ENCODE measurements at regions of chr15 and their contacts with region 1.

Region 1: DNA sequence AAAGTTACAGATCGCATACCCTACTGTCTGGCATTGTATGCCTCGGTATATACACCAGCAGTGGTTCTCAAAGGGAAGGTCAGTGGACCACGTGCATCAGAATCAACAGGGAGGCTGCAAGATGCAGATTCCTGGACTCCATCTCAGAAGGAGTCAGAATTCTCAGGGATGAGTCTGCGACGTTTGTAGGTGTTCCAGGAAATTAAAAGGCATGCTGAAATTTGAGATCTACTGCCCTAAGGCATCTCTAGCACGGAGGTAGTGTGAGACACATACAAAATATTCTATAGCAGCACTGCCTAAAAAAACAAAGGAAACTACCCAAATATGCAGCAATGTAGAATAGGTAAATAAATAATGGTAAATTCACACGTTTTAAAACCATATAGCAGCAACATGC is 136.8 kb upstream of the BNIP2 start:
- DNase-seq: peak; percentile 53 to 91
- H3K4me3 ChIP-seq: no peak overlapping the region
- H3K27ac ChIP-seq: peak overlapping the region; percentile 93
- H3K4me1 ChIP-seq: peaks cover 52% of the 10 kb centered on the region
- H3K27me3 ChIP-seq: no peaks in the 10 kb centered on the region
- CTCF ChIP-seq: no peak

Region 2: DNA sequence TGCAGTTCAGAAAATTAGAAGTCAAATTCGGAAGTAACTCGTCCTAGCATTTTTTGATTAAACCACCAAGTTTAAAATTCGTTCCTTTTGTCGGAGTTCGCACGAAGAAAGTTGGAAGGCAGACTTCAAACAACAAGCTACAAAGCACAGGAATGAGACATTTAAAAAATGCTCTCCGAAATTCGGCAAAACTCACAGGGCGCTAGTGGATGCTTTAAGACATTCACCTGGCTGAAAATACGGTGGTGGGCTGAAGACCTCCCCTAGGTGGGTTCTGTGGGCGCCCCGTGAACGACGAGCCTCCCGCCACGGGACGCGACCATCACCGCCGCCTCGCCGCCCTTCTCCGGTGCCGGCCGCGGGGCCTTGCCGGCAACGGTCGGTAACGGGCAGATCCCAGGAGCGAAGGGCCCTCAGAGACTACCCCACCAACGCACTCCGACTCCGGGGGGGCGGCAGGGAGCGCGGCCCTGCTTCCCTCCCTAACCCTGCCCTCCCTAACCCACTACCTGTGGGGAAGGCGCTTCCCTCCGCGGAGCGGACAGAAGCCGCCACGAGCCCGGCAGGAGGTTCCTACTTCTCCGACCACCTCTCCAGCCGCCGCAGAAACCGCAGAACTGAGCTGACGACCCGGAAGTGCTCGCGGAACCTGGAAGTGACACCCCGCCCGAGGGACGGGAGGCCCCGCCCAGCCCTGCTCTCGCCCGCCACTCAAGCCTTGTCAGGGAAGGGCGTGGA is 168.8 kb before region 1 on chr15 and contains the start of gene GTF2A2:
- CTCF ChIA-PET with region 1: no interaction called
- POLR2A ChIA-PET with region 1: no interaction called
- intact Hi-C with region 1: no loop called
- DNase-seq: peak; percentile 84 to 93
- H3K4me3 ChIP-seq: peak within 1 kb of the TSS; percentile 96
- H3K27ac ChIP-seq: peak within 1 kb of the TSS; percentile 37
- H3K4me1 ChIP-seq: peaks cover 14% of the 10 kb centered on the region
- H3K27me3 ChIP-seq: no peaks in the 10 kb centered on the region
- CTCF ChIP-seq: no peak
- total RNA-seq, gene GTF2A2: 80.8 and 111 TPM in 2 replicates

Region 3: DNA sequence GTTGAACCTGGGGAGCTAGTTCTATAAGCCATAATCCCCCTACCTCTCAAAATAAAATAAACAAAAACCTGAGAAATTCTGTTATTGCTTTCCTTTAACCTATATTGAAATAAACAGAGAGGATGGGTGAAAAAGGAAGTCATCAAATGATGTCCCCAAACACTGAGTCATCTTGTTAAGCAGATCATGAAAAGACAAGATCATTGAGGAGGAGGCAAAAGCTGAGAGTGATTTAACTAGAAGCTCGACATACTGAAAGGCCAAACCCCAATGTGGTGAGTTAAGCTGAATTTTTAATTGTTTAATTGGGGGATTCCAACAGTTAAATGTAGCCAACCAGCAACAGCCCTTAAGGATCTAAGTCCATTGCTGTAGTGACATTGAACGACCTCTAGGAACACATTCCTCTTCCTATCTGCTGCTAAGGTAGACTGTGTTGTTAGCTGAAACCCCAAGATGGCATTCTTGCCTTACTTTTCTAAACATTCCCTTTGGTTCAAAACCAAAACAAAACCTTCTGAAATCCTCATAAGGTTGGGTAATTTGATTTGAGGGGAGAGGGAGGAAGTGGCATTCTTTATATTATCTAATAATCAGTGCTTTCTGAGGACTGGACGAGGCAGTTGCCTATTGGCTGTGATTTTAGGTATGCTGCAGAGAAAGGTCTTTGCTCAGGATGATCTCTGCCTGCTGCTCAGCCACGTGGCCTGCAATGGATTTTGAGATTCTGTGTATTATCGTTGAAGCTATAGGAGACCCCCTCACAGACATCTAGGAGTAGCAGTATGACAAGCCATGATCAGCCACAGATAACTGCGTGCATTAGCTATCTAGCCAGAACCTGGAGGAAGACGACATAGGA is 74.1 kb before region 1 on chr15:
- CTCF ChIA-PET with region 1: no interaction called
- POLR2A ChIA-PET with region 1: no interaction called
- intact Hi-C with region 1: loop called (anchors 2 kb)
- DNase-seq: peak; percentile 8 to 68
- H3K4me3 ChIP-seq: no peak overlapping the region
- H3K27ac ChIP-seq: no peak overlapping the region
- H3K4me1 ChIP-seq: no peaks in the 10 kb centered on the region
- H3K27me3 ChIP-seq: no peaks in the 10 kb centered on the region
- CTCF ChIP-seq: peak; percentile 62

Region 4: GRCh38 chr15:59917504-59918157 is 91.7 kb after region 1 on chr15:
- CTCF ChIA-PET with region 1: interaction called, 7 read pairs
- POLR2A ChIA-PET with region 1: no interaction called
- intact Hi-C with region 1: loop called (anchors 1 kb)
- DNase-seq: peak; percentile 48 to 78
- H3K4me3 ChIP-seq: no peak overlapping the region
- H3K27ac ChIP-seq: no peak overlapping the region
- H3K4me1 ChIP-seq: peaks cover 19% of the 10 kb centered on the region
- H3K27me3 ChIP-seq: no peaks in the 10 kb centered on the region
- CTCF ChIP-seq: peak; percentile 65

Region 5: DNA sequence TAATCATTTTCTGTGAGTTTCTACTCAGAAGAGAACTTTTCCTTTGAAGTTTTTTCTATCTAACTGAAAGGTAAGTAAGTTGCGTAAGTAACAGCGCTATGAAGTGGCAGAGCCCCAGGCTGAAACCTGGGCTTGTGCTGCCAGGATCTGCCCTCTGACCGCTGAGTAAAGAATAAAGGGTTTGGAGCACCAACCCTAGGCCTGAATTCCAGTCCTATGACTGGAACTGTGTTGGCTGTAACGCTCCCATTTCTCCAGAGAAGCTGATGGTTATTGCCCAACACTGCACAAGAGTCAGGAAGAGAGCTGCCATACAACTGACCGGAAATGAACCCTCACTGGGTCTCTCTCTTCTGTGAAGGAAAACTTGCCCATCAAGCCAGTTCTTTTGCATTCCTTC is 265.3 kb after region 1 on chr15:
- CTCF ChIA-PET with region 1: no interaction called
- POLR2A ChIA-PET with region 1: interaction called, 5 read pairs
- intact Hi-C with region 1: loop called (anchors 1 kb)
- DNase-seq: peak; percentile 87 to 98
- H3K4me3 ChIP-seq: no peak overlapping the region
- H3K27ac ChIP-seq: peak overlapping the region; percentile 96
- H3K4me1 ChIP-seq: peaks cover 69% of the 10 kb centered on the region
- H3K27me3 ChIP-seq: no peaks in the 10 kb centered on the region
- CTCF ChIP-seq: no peak

Region 6: GRCh38 chr15:60326824-60327654 is 501.1 kb after region 1 on chr15:
- CTCF ChIA-PET with region 1: no interaction called
- POLR2A ChIA-PET with region 1: interaction called, 3 read pairs
- intact Hi-C with region 1: loop called (anchors 5 kb)
- DNase-seq: peak; percentile 36 to 42
- H3K4me3 ChIP-seq: no peak overlapping the region
- H3K27ac ChIP-seq: no peak overlapping the region
- H3K4me1 ChIP-seq: no peaks in the 10 kb centered on the region
- H3K27me3 ChIP-seq: no peaks in the 10 kb centered on the region
- CTCF ChIP-seq: peak; percentile 89

Region 7: DNA sequence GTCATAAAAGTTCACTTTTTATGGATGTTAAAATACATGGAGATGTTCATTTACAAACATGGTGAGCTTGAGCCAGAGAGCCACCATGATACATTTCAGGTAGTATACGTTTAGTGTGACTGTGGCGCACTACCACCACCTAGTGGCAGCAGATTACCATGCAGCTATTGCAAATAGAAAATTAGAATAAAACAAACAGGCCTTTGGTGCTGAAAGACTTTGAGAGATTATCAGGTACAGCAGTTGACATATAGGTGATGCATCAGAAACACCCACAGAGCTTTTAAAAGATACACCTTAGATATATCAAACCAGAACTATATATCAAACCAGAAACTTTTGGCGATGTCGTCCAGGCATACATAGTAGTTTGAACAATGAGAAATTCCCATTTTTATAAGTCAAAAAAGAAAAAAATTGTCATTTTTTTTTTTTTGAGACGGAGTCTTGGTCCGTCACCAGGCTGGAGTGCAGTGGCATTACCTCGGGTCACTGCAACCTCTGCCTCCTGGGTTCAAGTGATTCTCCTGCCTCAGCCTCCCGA is 695.0 kb after region 1 on chr15:
- CTCF ChIA-PET with region 1: no interaction called
- POLR2A ChIA-PET with region 1: no interaction called
- intact Hi-C with region 1: loop called (anchors 1 kb)
- DNase-seq: peak; percentile 36 to 68
- H3K4me3 ChIP-seq: no peak overlapping the region
- H3K27ac ChIP-seq: peak overlapping the region; percentile 92
- H3K4me1 ChIP-seq: peaks cover 33% of the 10 kb centered on the region
- H3K27me3 ChIP-seq: no peaks in the 10 kb centered on the region
- CTCF ChIP-seq: peak; percentile 88

Measured in PC-9 (cell line).